Activated naive CD4-positive, alpha-beta T cell treated with anti-CD3 and anti-CD28 coated beads, Interleukin-2, amount 10 ng/mL, durations not matched to agents 7 days and 5 days (primary cell): ENCODE measurements at regions of chr2 and their contacts with region 1.

Region 1: GRCh38 chr2:27723372-27724144 is 48.0 kb upstream of the MRPL33 start:
- DNase-seq: peak; percentile 45
- H3K4me3 Mint-ChIP-seq: no peak overlapping the region
- H3K27ac Mint-ChIP-seq: no peak overlapping the region
- H3K4me1 Mint-ChIP-seq: peaks cover 28% of the 10 kb centered on the region
- H3K27me3 Mint-ChIP-seq: peaks cover 27% of the 10 kb centered on the region

Region 2: DNA sequence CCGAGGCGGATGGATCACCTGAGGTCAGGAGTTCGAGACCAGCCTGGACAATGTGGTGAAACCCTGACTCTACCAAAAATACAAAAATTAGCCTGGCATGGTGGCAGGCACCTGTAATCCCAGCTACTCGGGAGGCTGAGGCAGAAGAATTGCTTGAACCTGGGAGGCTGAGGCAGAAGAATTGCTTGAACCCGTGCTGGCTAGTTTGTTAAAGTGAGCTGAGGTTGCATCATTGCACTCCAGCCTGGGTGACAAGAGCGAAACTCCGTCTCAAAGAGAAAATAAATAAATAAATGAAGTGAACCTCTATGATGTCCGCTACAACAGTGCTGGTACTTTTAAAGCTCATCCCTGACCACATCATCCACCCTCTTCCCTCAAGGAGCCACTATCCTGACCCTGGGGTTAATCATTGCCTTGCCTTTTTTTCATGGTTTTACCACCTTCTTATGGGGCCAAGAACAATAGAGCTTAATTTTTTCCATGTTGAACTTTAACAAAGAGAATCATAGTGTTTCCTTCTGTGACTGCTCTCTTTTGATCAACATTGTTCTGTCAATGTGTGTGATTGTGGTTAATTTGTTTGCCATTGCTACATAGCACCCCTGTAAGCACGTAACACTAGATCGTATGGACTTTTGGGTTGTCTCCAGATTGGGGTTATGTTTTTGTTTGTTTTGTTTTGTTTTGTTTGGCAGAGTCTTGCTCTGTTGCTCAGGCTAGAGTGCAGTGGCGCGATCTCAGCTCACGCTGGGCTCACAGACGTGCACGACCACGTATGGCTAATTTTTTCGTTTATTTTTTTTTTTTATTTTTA is 528.8 kb before region 1 on chr2:
- CTCF ChIA-PET with region 1: no interaction called
- DNase-seq: no peak
- H3K4me3 Mint-ChIP-seq: no peak overlapping the region
- H3K27ac Mint-ChIP-seq: no peak overlapping the region
- H3K4me1 Mint-ChIP-seq: no peaks in the 10 kb centered on the region
- H3K27me3 Mint-ChIP-seq: peaks cover 5% of the 10 kb centered on the region

Region 3: DNA sequence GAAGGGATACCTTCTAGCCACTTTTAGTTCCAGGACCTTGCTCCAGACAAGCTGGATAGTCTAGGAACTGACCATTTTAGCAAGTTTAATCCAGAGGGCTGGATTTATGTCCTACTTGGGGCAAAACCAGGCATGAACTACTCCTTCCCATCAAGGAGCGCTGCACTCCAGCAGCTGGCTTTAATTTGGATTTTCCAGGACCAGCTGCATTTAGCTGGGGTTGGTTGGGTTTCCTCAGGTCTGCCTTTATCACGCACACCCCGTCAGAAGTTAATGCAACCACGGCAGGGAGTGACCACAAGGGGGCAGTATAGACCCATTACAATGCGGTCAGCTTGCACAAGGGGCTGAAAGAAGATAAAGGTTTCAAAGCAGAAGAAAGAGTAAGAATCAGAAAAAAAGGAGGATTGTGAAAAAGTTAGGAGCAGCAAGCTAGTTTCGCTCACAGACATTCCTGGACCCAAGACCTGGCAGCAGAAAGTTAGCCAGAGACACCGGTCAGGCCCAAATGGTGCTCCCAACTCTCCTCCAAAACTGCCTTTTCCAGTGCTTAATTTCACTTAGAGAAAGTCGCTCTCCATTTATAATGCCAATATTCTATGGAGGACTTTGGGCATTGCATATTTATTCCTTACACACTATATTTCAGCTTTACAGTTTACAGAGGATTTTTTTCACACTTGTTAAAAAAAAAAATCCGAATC is 19.8 kb before region 1 on chr2:
- CTCF ChIA-PET with region 1: interaction called, 38 read pairs
- DNase-seq: peak; percentile 91
- H3K4me3 Mint-ChIP-seq: no peak overlapping the region
- H3K27ac Mint-ChIP-seq: no peak overlapping the region
- H3K4me1 Mint-ChIP-seq: peaks cover 10% of the 10 kb centered on the region
- H3K27me3 Mint-ChIP-seq: peaks cover 12% of the 10 kb centered on the region

Region 4: GRCh38 chr2:27711804-27712203 is 11.8 kb before region 1 on chr2:
- CTCF ChIA-PET with region 1: interaction called, 38 read pairs
- DNase-seq: no peak
- H3K4me3 Mint-ChIP-seq: no peak overlapping the region
- H3K27ac Mint-ChIP-seq: no peak overlapping the region
- H3K4me1 Mint-ChIP-seq: peaks cover 25% of the 10 kb centered on the region
- H3K27me3 Mint-ChIP-seq: peaks cover 62% of the 10 kb centered on the region

Region 5: DNA sequence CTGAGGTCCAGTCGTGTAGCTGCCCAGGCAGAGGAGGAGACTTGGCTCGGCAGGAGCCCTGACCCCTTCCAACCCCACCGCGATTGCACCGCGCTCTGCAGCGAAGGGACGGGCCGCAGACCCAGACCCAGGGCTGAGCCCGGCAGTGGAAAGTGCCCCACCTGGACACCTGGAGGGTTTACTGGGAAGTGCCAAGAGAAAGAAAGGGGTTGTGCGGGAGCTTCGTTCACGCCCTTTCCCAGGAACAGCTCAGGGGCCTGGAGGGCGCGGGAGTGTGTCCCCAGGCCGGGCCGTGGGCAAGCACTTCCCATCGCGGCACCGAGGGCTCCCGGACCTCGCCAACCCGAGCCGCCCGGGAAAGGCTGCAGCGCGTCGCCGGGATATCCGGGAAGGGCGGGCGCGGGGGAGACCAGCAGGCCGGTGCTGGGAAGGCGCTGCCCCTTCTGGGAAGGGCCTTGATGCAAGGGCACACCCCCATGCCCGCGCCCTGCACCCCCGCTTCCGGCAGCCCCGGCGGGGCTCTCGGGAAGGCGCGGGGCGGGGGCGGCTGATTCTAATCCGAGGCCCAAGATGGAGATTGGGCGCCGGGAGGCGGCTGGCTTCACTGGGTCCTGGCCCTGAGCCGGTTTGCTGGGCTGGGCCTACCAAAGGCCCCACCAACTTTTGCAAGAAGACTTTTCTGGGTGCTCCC is 11.8 kb after region 1 on chr2:
- CTCF ChIA-PET with region 1: interaction called, 18 read pairs
- DNase-seq: peak; percentile 66
- H3K4me3 Mint-ChIP-seq: peak overlapping the region; percentile 12
- H3K27ac Mint-ChIP-seq: no peak overlapping the region
- H3K4me1 Mint-ChIP-seq: peaks cover 13% of the 10 kb centered on the region
- H3K27me3 Mint-ChIP-seq: peaks cover 4% of the 10 kb centered on the region